ENCODE measurements at regions of chr3 and their contacts with region 1.

Region 1: GRCh38 chr3:134485718-134486576 is at the starts of genes ANAPC13 and CEP63:
- DNase-seq: peak; percentile 84 to 96 (median 96)
- ATAC-seq: peak; percentile 89
- H3K4me3 ChIP-seq: peak within 1 kb of the TSS; percentile 84
- H3K4me3 Mint-ChIP-seq: peak within 1 kb of the TSS; percentile 89 to 100 (median 99)
- H3K27ac ChIP-seq: peak within 1 kb of the TSS; percentile 87
- H3K27ac Mint-ChIP-seq: peak within 1 kb of the TSS; percentile 94 to 100 (median 99)
- H3K4me1 ChIP-seq: peaks cover 20 to 23% of the 10 kb centered on the region in 2 donors
- H3K4me1 Mint-ChIP-seq: peaks cover 41 to 80% (median 69%) of the 10 kb centered on the region in 7 donors
- H3K27me3 ChIP-seq: no peaks in the 10 kb centered on the region
- H3K27me3 Mint-ChIP-seq: no peaks in the 10 kb centered on the region
- total RNA-seq, gene ANAPC13: 21.2 to 36.7 (median 25.0) TPM
- total RNA-seq, gene CEP63: 21.1 to 42.3 (median 26.4) TPM

Region 2: GRCh38 chr3:133506215-133506901 is 979.6 kb before region 1 on chr3:
- CTCF ChIA-PET with region 1: no interaction called
- POLR2A ChIA-PET with region 1: no interaction called
- intact Hi-C with region 1: loop called in 1 of 2 experiments (anchors 5 kb)
- DNase-seq: peak in 7 of 9 donors; percentile 23 to 60 (median 50)
- ATAC-seq: peak; percentile 93
- H3K4me3 ChIP-seq: peak overlapping the region; percentile 1
- H3K4me3 Mint-ChIP-seq: peak overlapping the region; percentile 71 to 93 (median 82)
- H3K27ac ChIP-seq: peak overlapping the region; percentile 65
- H3K27ac Mint-ChIP-seq: peak overlapping the region; percentile 88 to 97 (median 94)
- H3K4me1 ChIP-seq: no peaks in the 10 kb centered on the region
- H3K4me1 Mint-ChIP-seq: peaks cover 10 to 19% (median 17%) of the 10 kb centered on the region in 7 donors
- H3K27me3 ChIP-seq: no peaks in the 10 kb centered on the region
- H3K27me3 Mint-ChIP-seq: no peaks in the 10 kb centered on the region

Region 3: GRCh38 chr3:133805527-133806475 is 680.1 kb before region 1 on chr3 and contains the start of gene SRPRB:
- CTCF ChIA-PET with region 1: no interaction called
- POLR2A ChIA-PET with region 1: no interaction called
- intact Hi-C with region 1: loop called (anchors 1 kb)
- DNase-seq: peak; percentile 91 to 96 (median 94)
- ATAC-seq: peak; percentile 98
- H3K4me3 ChIP-seq: peak within 1 kb of the TSS; percentile 76
- H3K4me3 Mint-ChIP-seq: peak within 1 kb of the TSS; percentile 90 to 99 (median 98)
- H3K27ac ChIP-seq: peak within 1 kb of the TSS; percentile 81
- H3K27ac Mint-ChIP-seq: peak within 1 kb of the TSS; percentile 70 to 98 (median 95)
- H3K4me1 ChIP-seq: peaks cover 7 to 8% of the 10 kb centered on the region in 2 donors
- H3K4me1 Mint-ChIP-seq: peaks cover 16 to 50% (median 34%) of the 10 kb centered on the region in 7 donors
- H3K27me3 ChIP-seq: no peaks in the 10 kb centered on the region
- H3K27me3 Mint-ChIP-seq: peaks cover 0 to 7% (median 5%) of the 10 kb centered on the region in 5 donors
- total RNA-seq, gene SRPRB: 27.4 to 63.3 (median 34.6) TPM

Region 4: DNA sequence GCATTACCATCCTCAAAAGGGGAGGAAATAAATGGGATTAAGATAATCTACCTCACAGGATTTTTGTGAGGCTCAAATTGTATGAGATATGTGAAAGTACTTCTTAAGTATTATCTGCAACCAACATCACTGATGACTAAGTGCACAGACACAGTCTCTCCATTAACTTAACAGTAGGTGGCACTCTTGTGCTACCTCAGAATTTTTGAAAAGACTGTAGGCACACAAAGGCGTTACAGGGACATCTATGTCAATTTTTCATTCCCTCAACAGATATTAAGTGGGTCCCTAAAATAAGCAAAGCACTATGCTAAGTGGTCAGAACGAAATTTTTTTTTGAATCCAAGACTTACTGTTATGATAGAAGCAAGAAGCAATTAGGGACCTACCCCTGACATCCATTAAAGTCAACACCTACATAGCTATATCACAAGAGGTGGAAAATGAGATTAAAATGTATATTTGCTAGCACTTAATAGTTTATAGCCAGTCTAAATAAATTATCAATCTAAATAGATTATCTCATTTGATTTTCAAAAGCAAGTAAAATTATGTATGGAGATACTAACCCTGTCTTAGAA is 288.2 kb before region 1 on chr3:
- CTCF ChIA-PET with region 1: no interaction called
- POLR2A ChIA-PET with region 1: interaction called, 3 read pairs
- intact Hi-C with region 1: loop called in 1 of 2 experiments (anchors 5 kb)
- DNase-seq: peak in 7 of 9 donors; percentile 24 to 55 (median 42)
- ATAC-seq: peak; percentile 83
- H3K4me3 ChIP-seq: no peak overlapping the region
- H3K4me3 Mint-ChIP-seq: no peak overlapping the region
- H3K27ac ChIP-seq: no peak overlapping the region
- H3K27ac Mint-ChIP-seq: no peak overlapping the region
- H3K4me1 ChIP-seq: no peaks in the 10 kb centered on the region
- H3K4me1 Mint-ChIP-seq: peaks cover 0 to 2% (median 0%) of the 10 kb centered on the region in 7 donors
- H3K27me3 ChIP-seq: no peaks in the 10 kb centered on the region
- H3K27me3 Mint-ChIP-seq: no peaks in the 10 kb centered on the region

Region 5: GRCh38 chr3:134250717-134251220 is 235.2 kb before region 1 on chr3 and contains the start of gene RYK:
- CTCF ChIA-PET with region 1: no interaction called
- POLR2A ChIA-PET with region 1: interaction called, 6 read pairs
- intact Hi-C with region 1: loop called (anchors 1 kb)
- DNase-seq: peak; percentile 65 to 85 (median 79)
- ATAC-seq: peak; percentile 93
- H3K4me3 ChIP-seq: peak within 1 kb of the TSS; percentile 78
- H3K4me3 Mint-ChIP-seq: peak within 1 kb of the TSS; percentile 90 to 99 (median 96)
- H3K27ac ChIP-seq: peak within 1 kb of the TSS; percentile 86
- H3K27ac Mint-ChIP-seq: peak within 1 kb of the TSS; percentile 72 to 99 (median 95)
- H3K4me1 ChIP-seq: peaks cover 12 to 14% of the 10 kb centered on the region in 2 donors
- H3K4me1 Mint-ChIP-seq: peaks cover 25 to 62% (median 57%) of the 10 kb centered on the region in 7 donors
- H3K27me3 ChIP-seq: no peaks in the 10 kb centered on the region
- H3K27me3 Mint-ChIP-seq: peaks cover 0 to 54% (median 0%) of the 10 kb centered on the region in 5 donors
- total RNA-seq, gene RYK: 10.7 to 53.5 (median 50.5) TPM

Region 6: DNA sequence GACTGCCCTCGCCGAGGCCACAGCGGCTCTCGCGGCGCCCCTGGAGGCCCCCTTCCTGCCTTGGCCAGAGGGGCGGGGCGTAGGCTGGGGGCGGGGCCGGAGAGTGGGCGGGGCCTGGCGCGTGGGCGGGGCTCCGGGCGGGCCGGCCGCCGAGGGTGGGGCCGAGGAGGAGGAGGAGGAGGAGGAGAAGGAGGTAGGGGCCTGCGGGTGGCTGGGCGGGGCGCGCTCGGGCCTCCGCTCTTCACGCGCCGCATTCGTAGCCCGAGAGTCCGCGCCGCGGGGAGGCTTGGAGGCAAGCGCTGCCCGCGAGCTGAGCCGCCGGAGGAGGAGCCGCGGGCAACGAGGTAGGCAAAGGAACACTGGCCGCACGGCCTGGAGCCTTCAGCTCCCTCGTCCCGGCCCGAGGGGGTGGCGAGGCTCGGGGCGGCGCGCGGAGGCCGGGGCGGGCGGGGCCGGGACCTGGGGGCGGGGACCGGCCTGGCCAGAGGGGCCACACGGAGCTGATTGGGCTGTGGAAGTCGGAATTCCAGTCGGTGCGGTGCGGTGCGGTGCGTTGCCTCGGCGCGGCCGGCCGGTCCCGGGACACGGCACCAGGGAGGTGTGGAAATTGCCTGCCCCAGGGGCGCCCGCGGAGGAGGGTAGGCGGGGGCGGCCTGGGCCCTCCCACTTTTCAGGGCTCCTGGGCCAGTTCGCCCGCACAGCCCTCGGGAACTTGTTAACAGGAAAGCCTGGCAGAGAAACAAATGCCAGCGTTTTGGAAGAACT is 1479.7 kb after region 1 on chr3 and contains the start of gene PPP2R3A:
- CTCF ChIA-PET with region 1: no interaction called
- POLR2A ChIA-PET with region 1: no interaction called
- intact Hi-C with region 1: loop called in 1 of 2 experiments (anchors 10 kb)
- DNase-seq: peak; percentile 41 to 71 (median 59)
- ATAC-seq: peak; percentile 97
- H3K4me3 ChIP-seq: peak within 1 kb of the TSS; percentile 37
- H3K4me3 Mint-ChIP-seq: peak within 1 kb of the TSS; percentile 74 to 85 (median 81)
- H3K27ac ChIP-seq: no peak within 1 kb of the TSS
- H3K27ac Mint-ChIP-seq: peak within 1 kb of the TSS in 6 of 9 donors; percentile 8 to 66 (median 40)
- H3K4me1 ChIP-seq: peaks cover 5 to 7% of the 10 kb centered on the region in 2 donors
- H3K4me1 Mint-ChIP-seq: peaks cover 9 to 19% (median 12%) of the 10 kb centered on the region in 7 donors
- H3K27me3 ChIP-seq: no peaks in the 10 kb centered on the region
- H3K27me3 Mint-ChIP-seq: peaks cover 30 to 49% (median 41%) of the 10 kb centered on the region in 5 donors
- total RNA-seq, gene PPP2R3A: 0.13 to 0.89 (median 0.59) TPM in 4 of 5 experiments, not detected in the other

Measured in naive thymus-derived CD4-positive, alpha-beta T cell (primary cell).